HCT116 (cell line): ENCODE measurements at regions of chr5 and their contacts with region 1.

Region 1: DNA sequence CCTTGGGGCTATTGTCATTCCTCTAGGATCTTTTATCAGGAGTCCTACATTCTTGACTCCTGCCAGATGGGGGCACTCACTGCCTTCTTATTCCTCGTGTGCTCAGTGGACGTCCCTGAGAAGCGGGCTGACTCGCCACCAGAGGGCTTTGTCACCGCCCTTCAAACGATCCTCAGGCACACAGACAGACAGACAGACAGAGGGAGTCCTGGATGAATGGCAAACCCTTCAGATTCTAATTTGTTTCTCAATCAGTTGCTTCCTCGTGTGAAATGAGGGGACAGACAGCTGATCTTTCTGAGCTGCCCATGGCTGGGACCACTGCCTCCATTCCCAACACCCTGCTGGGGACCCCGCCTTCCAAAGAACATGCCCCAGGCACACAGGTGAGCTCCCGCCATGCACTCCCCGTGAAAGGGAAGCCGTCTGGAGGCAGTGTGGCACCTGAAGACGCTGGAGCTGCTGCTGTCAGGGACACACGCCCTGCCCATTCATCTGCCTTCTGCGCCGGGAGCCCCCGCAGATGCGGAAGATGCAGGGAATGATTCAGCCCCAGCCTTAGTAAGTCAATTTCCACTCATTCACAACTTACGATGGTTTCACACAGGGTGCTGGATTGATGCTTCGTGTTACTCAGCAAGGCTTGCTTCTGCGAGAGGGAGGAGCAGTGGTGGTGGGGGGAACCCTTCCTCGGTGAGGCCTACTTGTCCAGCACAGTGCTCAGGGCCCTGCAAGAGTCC is 24.9 kb upstream of the SH3PXD2B start:
- DNase-seq: peak; percentile 81
- ATAC-seq: peak; percentile 99
- H3K4me3 ChIP-seq: no peak overlapping the region
- H3K27ac ChIP-seq: no peak overlapping the region
- H3K4me1 ChIP-seq: no peaks in the 10 kb centered on the region
- H3K27me3 ChIP-seq: no peaks in the 10 kb centered on the region
- CTCF ChIP-seq: peak; percentile 84 to 99 (median 84)
- POLR2A ChIP-seq: no peak
- RAD21 ChIP-seq: peak; percentile 95

Region 2: DNA sequence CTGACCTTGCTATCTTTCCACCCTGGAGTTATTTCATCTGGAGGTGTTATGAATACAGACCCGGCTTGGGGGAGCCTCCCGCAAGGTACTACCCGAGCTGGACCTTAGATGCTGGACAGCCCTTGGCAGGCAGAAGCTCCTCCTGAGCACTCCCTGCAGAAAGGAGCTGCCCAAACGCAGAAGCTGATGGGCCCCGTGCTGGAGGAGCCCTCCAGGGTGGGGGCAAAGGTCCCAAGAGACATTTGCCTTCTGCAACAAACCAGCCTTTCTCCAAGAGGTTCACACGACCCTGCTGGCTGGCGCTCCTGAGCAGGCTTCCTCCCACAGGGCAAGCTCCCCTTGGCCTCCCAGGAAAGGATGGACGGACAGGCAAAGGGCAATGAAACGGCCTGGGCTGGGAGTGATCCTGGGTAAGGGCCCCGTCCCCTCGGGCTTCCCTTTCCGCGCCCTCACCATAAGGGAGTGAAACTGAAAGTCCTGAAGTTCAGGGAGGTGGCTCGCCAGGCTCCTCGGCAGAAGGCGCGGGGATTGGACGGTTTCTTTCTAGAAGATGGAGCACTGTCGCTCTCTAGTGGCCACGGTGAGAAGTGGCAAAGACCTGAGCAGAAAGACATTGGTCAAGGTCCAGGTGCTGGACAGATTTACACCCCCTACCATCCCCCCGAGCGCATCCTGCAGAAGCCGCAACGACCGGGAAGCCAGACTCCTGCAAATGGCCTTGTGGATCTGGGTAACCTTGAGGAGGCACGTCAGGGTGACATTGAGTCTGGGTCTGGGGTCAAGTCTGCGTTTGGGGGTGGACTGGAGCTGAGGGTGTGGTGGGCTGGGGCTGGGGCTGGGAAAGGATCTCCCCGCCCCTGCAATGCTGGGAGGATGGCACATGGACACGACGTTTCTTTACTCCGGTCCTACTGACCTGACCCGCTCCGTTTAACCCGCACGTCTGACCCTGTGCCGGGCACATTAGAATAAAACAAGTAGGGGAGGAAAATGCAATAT is 218.2 kb after region 1 on chr5:
- CTCF ChIA-PET with region 1: interaction called, 27 read pairs
- POLR2A ChIA-PET with region 1: no interaction called
- RAD21 ChIA-PET with region 1: interaction called in 1 of 2 experiments, 7 read pairs
- intact Hi-C with region 1: loop called (anchors 1 kb)
- DNase-seq: peak; percentile 57
- ATAC-seq: peak; percentile 93
- H3K4me3 ChIP-seq: peak overlapping the region; percentile 50 to 60
- H3K27ac ChIP-seq: no peak overlapping the region
- H3K4me1 ChIP-seq: peaks cover 0 to 9% of the 10 kb centered on the region in 2 experiments; a peak in 2 of 4 replicates
- H3K27me3 ChIP-seq: no peaks in the 10 kb centered on the region
- CTCF ChIP-seq: peak; percentile 81 to 98 (median 89)
- POLR2A ChIP-seq: no peak
- RAD21 ChIP-seq: peak; percentile 100

Region 3: GRCh38 chr5:172932313-172933017 is 453.3 kb after region 1 on chr5:
- CTCF ChIA-PET with region 1: no interaction called
- POLR2A ChIA-PET with region 1: no interaction called
- RAD21 ChIA-PET with region 1: no interaction called
- intact Hi-C with region 1: loop called (anchors 10 kb)
- DNase-seq: peak; percentile 10
- ATAC-seq: peak; percentile 96
- H3K4me3 ChIP-seq: no peak overlapping the region
- H3K27ac ChIP-seq: no peak overlapping the region
- H3K4me1 ChIP-seq: no peaks in the 10 kb centered on the region; a peak in 1 of 4 replicates
- H3K27me3 ChIP-seq: no peaks in the 10 kb centered on the region
- CTCF ChIP-seq: peak; percentile 87 to 91 (median 90)
- POLR2A ChIP-seq: no peak
- RAD21 ChIP-seq: peak; percentile 97